ENCODE measurements at regions of chr16 and their contacts with region 1.

Region 1: DNA sequence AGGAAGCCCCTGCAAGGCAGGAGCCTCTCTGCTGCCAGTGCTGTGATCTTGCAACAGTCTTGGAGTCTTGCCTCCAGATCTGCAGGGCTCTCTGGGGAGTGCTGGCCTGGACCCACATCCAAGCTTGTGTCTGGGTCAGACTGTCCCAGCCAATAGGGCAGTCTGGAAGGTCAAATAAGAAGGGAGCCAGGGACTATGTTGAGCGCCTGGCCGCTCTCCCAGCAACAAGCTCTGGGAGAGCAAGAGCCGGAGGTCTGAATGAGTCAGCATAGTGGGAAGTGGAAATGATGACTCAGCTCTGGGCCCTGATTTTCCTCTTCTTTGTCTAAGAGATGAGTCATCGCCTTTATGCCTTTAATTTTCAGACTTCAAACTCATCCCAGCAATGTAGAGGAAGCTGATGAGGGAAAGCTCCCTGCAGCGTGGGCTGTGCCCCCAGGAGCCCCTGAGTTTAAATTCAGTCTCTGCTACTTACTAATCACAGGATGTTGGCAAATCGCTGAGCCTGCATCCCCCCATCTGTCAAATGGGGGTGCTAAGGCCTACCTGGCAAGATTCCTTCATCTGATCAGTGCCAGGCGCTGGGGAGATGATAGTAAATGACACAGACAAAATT is 43.6 kb upstream of the HAPSTR1 start:
- DNase-seq: peak; percentile 83 to 85
- H3K4me3 ChIP-seq: no peak overlapping the region
- H3K27ac ChIP-seq: peak overlapping the region; percentile 61 to 83
- H3K4me1 ChIP-seq: no peaks in the 10 kb centered on the region
- H3K27me3 ChIP-seq: no peaks in the 10 kb centered on the region
- CTCF ChIP-seq: no peak
- POLR2A ChIP-seq: no peak

Region 2: GRCh38 chr16:9384141-9384540 is 336.3 kb after region 1 on chr16:
- intact Hi-C with region 1: loop called (anchors 10 kb)
- DNase-seq: no peak
- H3K4me3 ChIP-seq: no peak overlapping the region
- H3K27ac ChIP-seq: no peak overlapping the region
- H3K4me1 ChIP-seq: no peaks in the 10 kb centered on the region
- H3K27me3 ChIP-seq: peaks cover 0 to 5% of the 10 kb centered on the region in 2 donors
- CTCF ChIP-seq: no peak
- POLR2A ChIP-seq: no peak

Measured in breast epithelium (tissue), 4 donors.